CD14-positive monocyte (primary cell): ENCODE measurements at regions of chr15 and their contacts with region 1.

Region 1: GRCh38 chr15:58212909-58213526 is 74.8 kb downstream of the AQP9 start:
- DNase-seq: peak in 2 of 3 donors; percentile 12 to 25
- H3K4me3 ChIP-seq: no peak overlapping the region
- H3K4me3 Mint-ChIP-seq: no peak overlapping the region
- H3K27ac ChIP-seq: no peak overlapping the region
- H3K27ac Mint-ChIP-seq: no peak overlapping the region
- H3K4me1 ChIP-seq: peaks cover 0 to 3% of the 10 kb centered on the region in 2 donors
- H3K4me1 Mint-ChIP-seq: peaks cover 25% of the 10 kb centered on the region
- H3K27me3 ChIP-seq: no peaks in the 10 kb centered on the region
- H3K27me3 Mint-ChIP-seq: peaks cover 1 to 6% (median 1%) of the 10 kb centered on the region in 3 donors
- CTCF ChIP-seq: peak; percentile 59

Region 2: DNA sequence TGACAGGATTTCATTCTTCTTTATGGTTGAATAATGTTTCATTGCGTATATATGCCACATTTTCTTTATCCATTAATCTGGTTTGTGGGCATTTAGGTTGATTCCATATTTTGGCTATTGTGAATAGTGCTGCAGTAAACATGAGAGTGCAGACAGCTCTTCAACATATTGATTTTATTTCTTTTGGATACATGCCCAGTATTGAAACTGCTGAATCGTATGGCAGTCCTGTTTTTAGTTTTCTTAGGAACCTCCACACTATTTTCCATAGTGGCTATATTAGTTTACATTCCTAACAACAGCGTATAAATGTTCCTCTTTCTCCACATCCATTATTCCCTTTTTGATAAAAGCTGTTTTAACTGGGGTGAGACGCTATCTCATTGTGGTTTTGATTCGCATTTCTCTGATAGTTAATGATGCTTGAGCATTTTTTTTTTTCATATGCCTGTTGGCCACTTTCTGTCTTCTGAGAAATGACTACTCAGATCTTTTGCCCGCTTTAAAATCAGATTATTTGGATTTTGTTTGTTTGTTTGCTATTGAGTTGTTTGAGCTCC is 53.1 kb before region 1 on chr15:
- intact Hi-C with region 1: loop called in 1 of 2 experiments (anchors 10 kb)
- DNase-seq: no peak
- H3K4me3 ChIP-seq: no peak overlapping the region
- H3K4me3 Mint-ChIP-seq: no peak overlapping the region
- H3K27ac ChIP-seq: no peak overlapping the region
- H3K27ac Mint-ChIP-seq: no peak overlapping the region
- H3K4me1 ChIP-seq: no peaks in the 10 kb centered on the region
- H3K4me1 Mint-ChIP-seq: peaks cover 9% of the 10 kb centered on the region
- H3K27me3 ChIP-seq: no peaks in the 10 kb centered on the region
- H3K27me3 Mint-ChIP-seq: peaks cover 0 to 6% (median 0%) of the 10 kb centered on the region in 3 donors
- CTCF ChIP-seq: no peak

Region 3: DNA sequence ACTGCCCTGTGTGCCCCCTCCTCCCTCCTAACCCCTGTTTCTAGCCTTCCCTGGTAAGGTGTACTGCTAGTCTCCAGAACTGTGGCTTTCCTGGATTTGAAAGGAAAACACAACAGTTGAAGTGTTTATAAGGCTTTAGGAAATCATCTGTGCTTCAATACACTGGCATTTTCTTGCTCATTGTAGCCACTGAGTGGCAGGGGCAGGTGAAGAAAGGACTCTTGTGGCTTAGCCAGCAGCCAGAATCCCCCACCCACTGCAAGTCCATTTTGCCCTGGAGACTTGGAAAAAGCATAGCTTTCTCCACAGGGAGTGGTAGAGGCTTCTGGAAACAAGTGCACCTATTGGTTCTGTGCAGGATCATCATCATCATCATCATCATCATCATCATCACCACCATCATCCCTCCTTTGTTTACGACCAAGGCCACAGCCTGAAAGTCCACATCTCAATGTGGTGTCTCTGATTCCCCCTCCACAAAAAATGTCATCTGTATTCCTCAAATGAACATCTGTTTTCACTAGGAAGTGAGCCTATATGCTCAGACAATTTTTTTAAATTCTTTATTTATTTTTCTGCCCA is 41.5 kb before region 1 on chr15:
- intact Hi-C with region 1: no loop called
- DNase-seq: no peak
- H3K4me3 ChIP-seq: no peak overlapping the region
- H3K4me3 Mint-ChIP-seq: peak overlapping the region in 1 of 2 donors; percentile 7
- H3K27ac ChIP-seq: no peak overlapping the region
- H3K27ac Mint-ChIP-seq: no peak overlapping the region
- H3K4me1 ChIP-seq: peaks cover 6 to 8% of the 10 kb centered on the region in 2 donors
- H3K4me1 Mint-ChIP-seq: peaks cover 8% of the 10 kb centered on the region
- H3K27me3 ChIP-seq: peaks cover 0 to 2% of the 10 kb centered on the region in 2 donors
- H3K27me3 Mint-ChIP-seq: peaks cover 4 to 20% (median 8%) of the 10 kb centered on the region in 3 donors
- CTCF ChIP-seq: no peak